PC-3 (cell line): ENCODE measurements at regions of chr2 and their contacts with region 1.

Region 1: GRCh38 chr2:45237850-45238542 is 228.7 kb upstream of the SIX2 start:
- DNase-seq: peak; percentile 99
- ATAC-seq: peak; percentile 90
- H3K4me3 ChIP-seq: 0 out of 2 replicates have a peak overlapping the region, but pooled peaks have one; percentile 11
- H3K27ac ChIP-seq: peak overlapping the region; percentile 95
- H3K4me1 ChIP-seq: peaks cover 52% of the 10 kb centered on the region
- H3K27me3 ChIP-seq: no peaks in the 10 kb centered on the region
- CTCF ChIP-seq: peak; percentile 71

Region 2: GRCh38 chr2:45024600-45025291 is 213.2 kb before region 1 on chr2:
- CTCF ChIA-PET with region 1: interaction called, 3 read pairs
- POLR2A ChIA-PET with region 1: interaction called, 14 read pairs
- intact Hi-C with region 1: loop called (anchors 1 kb)
- DNase-seq: peak; percentile 99
- ATAC-seq: peak; percentile 88
- H3K4me3 ChIP-seq: no peak overlapping the region
- H3K27ac ChIP-seq: peak overlapping the region; percentile 62
- H3K4me1 ChIP-seq: peaks cover 13% of the 10 kb centered on the region
- H3K27me3 ChIP-seq: no peaks in the 10 kb centered on the region
- CTCF ChIP-seq: peak; percentile 92

Region 3: GRCh38 chr2:45119855-45120254 is 118.1 kb before region 1 on chr2:
- CTCF ChIA-PET with region 1: interaction called, 3 read pairs
- POLR2A ChIA-PET with region 1: no interaction called
- intact Hi-C with region 1: loop called (anchors 1 kb)
- DNase-seq: peak; percentile 93
- ATAC-seq: peak; percentile 86
- H3K4me3 ChIP-seq: no peak overlapping the region
- H3K27ac ChIP-seq: peak overlapping the region; percentile 84
- H3K4me1 ChIP-seq: peaks cover 49% of the 10 kb centered on the region
- H3K27me3 ChIP-seq: no peaks in the 10 kb centered on the region
- CTCF ChIP-seq: no peak

Region 4: GRCh38 chr2:45177870-45178269 is 60.1 kb before region 1 on chr2:
- CTCF ChIA-PET with region 1: interaction called, 7 read pairs
- POLR2A ChIA-PET with region 1: interaction called, 40 read pairs
- intact Hi-C with region 1: loop called (anchors 1 kb)
- DNase-seq: peak; percentile 94
- ATAC-seq: 0 out of 2 replicates have a peak, but pooled peaks have one; percentile 8
- H3K4me3 ChIP-seq: no peak overlapping the region
- H3K27ac ChIP-seq: peak overlapping the region; percentile 95
- H3K4me1 ChIP-seq: peaks cover 54% of the 10 kb centered on the region
- H3K27me3 ChIP-seq: no peaks in the 10 kb centered on the region
- CTCF ChIP-seq: no peak

Region 5: DNA sequence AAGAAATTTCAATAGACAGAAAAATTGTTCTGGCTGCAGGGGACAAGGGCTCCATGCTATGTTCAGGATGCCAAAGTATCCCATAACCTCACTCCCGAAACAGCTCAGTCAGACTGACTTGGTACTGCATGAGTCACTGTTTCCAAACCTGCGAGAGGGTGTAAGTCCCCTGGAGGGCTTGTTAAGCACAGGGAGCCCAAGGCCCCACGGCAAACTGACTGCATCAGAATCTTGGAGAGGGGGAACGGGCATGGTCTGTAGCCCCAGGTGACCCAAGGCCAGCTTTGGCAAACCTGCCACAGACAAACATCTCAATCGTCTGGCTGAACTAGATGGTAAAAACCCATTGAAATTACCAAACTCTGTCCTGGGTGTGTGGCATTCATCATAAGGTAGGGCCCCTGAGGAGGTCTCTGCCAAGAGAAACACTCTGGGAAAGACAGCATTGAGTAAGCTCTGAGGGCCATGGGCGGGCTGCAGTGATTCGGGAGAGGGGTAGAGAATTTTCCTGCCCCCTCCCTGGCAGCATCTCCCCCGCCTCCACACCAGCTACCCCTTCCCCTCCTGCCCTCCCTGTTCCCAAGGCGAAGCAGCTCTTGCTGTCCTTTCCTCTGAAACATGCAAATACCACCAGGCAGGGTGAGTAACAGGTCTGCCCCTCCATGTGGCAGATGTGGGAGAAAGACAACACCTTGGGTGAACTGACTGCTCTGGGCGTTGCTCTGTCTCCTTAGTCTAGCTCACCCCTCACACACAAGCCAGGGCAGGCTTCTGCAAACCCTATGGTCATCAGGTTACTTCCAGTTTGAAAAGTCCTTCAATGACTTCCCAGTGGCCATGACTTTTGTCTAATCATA is 46.0 kb after region 1 on chr2:
- CTCF ChIA-PET with region 1: no interaction called
- POLR2A ChIA-PET with region 1: no interaction called
- intact Hi-C with region 1: no loop called
- DNase-seq: peak; percentile 97
- ATAC-seq: peak; percentile 78
- H3K4me3 ChIP-seq: no peak overlapping the region; the same call in 1 of the 2 replicates
- H3K27ac ChIP-seq: peak overlapping the region; percentile 98
- H3K4me1 ChIP-seq: peaks cover 70% of the 10 kb centered on the region
- H3K27me3 ChIP-seq: no peaks in the 10 kb centered on the region
- CTCF ChIP-seq: no peak

Region 6: DNA sequence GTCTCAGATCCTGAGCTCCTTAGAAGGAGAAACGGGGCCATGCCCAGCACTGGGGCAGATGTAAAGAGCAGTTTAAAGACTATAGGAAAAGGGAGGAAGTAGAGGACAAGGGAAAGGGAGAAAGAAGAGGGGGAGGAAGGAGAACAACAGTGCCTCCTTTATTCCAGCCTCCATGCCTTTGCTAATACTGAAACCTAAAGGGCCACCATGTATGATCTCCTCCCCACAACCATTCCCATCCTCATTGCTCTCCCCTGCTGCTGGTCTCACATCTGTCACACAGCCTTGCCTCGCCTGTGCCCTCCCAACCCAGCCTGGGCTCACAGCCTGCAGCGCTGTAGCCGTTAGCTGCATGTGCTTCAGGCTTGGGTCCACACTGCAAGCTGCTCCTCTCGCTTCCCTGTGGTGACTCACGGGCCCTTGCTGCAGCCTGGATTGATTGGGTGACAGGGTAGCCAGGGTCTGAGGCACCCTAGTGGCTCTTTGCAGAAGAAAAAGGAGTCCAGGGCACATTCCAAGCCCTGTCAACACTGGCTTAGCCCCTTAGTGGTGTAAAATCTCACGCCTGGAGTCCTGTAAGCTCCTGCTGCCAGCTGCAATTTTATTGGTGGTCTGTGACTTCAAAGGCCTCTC is 91.2 kb after region 1 on chr2:
- CTCF ChIA-PET with region 1: no interaction called
- POLR2A ChIA-PET with region 1: no interaction called
- intact Hi-C with region 1: loop called (anchors 5 kb)
- DNase-seq: peak; percentile 53
- ATAC-seq: peak; percentile 35; the same call in 1 of the 2 replicates
- H3K4me3 ChIP-seq: no peak overlapping the region
- H3K27ac ChIP-seq: peak overlapping the region; percentile 94
- H3K4me1 ChIP-seq: peaks cover 30% of the 10 kb centered on the region
- H3K27me3 ChIP-seq: no peaks in the 10 kb centered on the region
- CTCF ChIP-seq: peak; percentile 35; the same call in 1 of the 2 replicates

Region 7: DNA sequence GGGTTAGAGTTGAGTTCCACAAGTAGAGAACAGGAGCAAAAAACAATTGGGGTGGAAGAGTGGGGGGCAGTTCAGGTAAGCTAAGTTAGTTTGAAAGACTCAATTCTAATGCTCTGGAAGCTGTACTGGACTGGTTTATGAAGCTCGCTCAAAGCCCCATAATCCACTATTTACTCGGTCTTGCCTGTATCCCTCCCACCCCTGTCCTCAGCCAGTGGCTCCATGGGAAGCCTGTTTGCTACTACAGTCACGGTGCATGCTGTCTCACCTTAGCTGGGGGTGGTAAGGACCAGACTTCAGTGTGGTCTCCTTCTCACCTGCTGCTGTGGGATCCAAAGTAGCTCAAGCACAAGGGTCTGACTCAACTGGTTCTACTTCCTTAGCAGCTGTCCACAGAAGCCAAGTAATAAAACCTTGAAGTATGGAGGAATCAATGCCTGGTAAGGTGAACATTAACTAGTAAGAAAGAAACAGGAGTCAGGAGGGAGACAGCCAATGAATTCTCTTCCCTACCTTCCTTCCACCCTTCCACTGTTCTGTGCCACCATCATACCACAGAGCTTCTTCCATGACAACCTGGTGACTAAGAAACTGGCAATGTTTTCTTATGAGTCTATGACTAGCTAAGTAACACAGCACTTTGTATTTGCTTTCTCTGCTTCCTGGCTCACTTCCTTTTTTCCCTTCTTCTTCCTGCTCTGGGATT is 142.3 kb after region 1 on chr2:
- CTCF ChIA-PET with region 1: interaction called, 3 read pairs
- POLR2A ChIA-PET with region 1: interaction called, 3 read pairs
- intact Hi-C with region 1: loop called (anchors 5 kb)
- DNase-seq: peak; percentile 98
- ATAC-seq: peak; percentile 98
- H3K4me3 ChIP-seq: no peak overlapping the region
- H3K27ac ChIP-seq: peak overlapping the region; percentile 98
- H3K4me1 ChIP-seq: peaks cover 40% of the 10 kb centered on the region
- H3K27me3 ChIP-seq: no peaks in the 10 kb centered on the region
- CTCF ChIP-seq: no peak

Region 8: DNA sequence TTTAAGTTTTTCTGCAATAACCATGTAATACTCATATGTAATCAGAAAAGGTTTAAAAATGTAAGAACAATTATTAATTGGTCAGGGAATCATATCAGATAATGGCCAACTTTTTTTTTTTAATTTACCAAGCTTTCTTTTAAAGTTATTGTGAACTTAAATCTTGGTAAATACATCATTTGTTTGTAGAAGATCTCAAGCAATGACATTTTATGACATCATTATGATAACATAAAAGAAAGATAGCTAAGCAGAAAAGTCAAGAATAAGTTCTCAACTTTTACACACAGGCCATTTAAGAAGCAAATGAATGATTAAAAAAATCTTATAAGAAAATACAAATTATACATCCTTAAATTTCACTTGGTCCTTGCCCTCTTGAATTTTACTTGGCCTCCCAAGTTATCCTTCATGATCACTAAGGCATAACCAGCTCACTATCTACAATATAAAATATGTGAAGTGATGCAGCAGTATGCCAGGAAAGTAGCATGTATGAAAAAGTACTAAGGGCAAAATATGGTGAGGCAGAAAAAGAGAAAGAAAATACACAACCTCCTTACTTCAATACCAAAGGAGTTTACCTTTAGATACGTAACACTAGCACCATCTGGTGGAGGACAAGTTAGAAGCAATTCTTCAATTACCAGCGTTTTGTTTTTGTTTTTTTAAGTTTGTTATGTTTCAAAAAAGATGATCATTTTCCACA is 256.4 kb after region 1 on chr2:
- CTCF ChIA-PET with region 1: interaction called, 4 read pairs
- POLR2A ChIA-PET with region 1: no interaction called
- intact Hi-C with region 1: loop called (anchors 1 kb)
- DNase-seq: peak; percentile 83
- ATAC-seq: peak; percentile 40; the same call in 1 of the 2 replicates
- H3K4me3 ChIP-seq: no peak overlapping the region
- H3K27ac ChIP-seq: peak overlapping the region; percentile 38
- H3K4me1 ChIP-seq: peaks cover 5% of the 10 kb centered on the region
- H3K27me3 ChIP-seq: no peaks in the 10 kb centered on the region
- CTCF ChIP-seq: peak; percentile 89